Activated CD4-positive, alpha-beta T cell treated with anti-CD3 and anti-CD28 coated beads for 36 hours (primary cell): ENCODE measurements at regions of chr12 and their contacts with region 1.

Region 1: DNA sequence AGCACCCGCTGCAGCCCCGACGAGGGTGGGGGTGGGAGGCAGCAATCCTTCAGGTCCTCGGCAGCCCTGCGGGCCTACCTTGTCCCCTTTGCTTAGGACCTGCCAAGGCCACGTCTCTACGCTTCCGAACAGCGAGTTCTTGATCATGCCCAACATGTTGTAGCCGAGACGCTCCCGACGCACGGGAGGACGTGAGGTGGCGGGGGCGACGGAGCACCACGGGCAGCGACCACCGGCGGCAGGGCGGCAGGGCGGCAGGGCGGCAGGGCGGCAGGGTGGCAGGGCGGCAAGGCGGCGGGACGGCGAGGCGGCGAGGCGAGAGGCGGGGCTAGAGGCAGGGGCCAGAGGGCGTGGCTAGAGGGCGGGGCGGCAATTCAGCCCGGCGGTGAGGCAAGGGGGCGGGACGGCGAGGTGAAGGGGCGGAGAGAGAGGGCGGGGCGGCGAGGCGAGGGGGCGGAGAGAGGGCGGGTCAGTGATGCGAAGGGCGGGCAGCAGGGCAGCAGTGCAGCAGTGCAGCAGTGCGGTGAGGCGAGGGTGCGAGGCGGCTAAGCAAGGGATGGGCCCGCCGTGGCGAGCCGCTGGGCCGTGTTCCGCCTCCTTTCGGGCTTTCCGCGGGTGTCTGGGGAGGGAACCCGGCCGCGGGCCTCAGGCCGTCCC is at the start of gene HEBP1:
- DNase-seq: peak; percentile 99
- ATAC-seq: peak; percentile 92
- H3K4me3 Mint-ChIP-seq: peak within 1 kb of the TSS; percentile 86
- H3K27ac Mint-ChIP-seq: peak within 1 kb of the TSS; percentile 75
- H3K4me1 Mint-ChIP-seq: peaks cover 28% of the 10 kb centered on the region
- H3K27me3 Mint-ChIP-seq: peaks cover 6% of the 10 kb centered on the region
- total RNA-seq, gene HEBP1: 23.5 to 28.6 TPM

Region 2: DNA sequence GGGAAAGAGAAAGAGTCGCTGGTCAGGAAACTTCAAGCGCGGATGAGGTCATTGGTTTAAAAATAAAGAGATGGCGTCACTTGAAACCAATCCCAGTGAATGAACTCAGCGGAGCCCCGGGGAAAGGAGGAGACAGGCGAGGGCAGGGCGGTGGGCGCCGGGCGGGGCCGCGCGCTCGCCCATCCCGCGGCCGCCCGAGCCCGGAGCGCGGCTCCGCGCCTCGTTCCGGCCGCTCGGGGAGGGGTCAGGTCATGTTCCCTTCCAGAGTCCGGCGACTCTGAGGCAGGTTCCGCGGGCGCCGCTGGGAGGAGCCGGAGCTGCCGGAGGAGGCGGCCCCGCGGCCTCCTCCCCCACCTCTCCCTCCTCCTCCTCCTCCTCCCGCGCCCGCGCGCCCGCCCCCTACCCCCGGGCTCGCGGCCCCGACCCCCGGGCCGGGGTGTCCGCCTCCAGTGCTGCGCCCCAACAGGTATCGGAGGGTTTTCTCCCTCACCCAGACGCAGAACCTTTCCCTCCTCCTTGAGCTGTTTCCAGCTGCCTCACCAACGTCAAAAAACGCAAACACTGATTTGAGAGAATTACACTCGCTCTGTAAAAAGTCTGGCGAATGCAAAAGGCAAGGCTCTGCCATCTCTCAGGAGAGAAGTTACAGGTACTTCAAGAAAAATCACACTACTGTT is 437.4 kb before region 1 on chr12 and contains the start of gene DUSP16:
- CTCF ChIA-PET with region 1: no interaction called
- POLR2A ChIA-PET with region 1: no interaction called
- intact Hi-C with region 1: no loop called
- DNase-seq: peak; percentile 82
- ATAC-seq: peak; percentile 76
- H3K4me3 Mint-ChIP-seq: peak within 1 kb of the TSS; percentile 84
- H3K27ac Mint-ChIP-seq: peak within 1 kb of the TSS; percentile 88
- H3K4me1 Mint-ChIP-seq: peaks cover 37% of the 10 kb centered on the region
- H3K27me3 Mint-ChIP-seq: no peaks in the 10 kb centered on the region
- total RNA-seq, gene DUSP16: 39.3 to 40.4 TPM

Region 3: DNA sequence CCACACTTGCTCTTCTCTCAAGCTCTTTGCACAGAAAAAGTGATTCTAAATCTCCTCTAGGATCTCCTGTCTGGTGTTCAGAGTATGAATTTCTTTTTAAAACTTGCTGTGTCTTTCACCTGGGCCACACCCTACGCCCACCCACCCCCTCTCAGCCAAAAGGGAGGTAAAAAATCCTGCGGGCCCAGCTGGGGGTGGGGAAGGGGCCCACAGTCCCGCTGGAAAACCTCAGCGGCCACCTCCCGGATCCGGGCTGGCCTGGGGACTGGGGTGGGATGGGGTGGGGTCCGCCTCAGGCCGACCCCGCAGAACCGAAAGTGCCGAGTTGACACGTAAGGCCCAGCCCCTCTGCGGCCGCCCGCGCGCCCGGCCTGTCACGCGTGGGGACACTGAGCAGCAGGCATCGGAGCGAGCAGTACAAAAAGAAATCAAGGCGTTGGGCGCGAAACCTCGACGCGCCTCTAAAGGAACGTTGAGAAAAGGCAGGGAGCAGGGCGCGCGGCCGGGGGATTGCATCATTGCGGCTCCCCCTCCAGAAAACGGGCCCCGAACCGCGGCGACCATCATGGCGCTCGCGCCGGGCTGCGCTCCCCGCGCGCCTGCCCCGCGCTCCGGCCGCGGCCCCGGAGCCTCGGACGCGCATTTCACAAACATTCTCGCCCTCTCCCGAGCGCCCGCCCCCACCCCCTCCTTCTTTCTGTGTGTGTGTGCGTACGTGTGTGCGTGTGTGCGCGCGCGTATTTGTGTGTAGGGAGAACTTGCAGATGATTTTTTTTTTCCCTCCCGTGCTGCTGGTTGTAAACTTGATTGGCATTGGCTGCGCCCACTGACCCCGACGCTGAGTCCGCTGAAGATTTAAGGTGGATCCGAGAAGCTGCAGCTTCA is 275.2 kb before region 1 on chr12:
- CTCF ChIA-PET with region 1: no interaction called
- POLR2A ChIA-PET with region 1: no interaction called
- intact Hi-C with region 1: loop called in 1 of 2 experiments (anchors 2 kb)
- DNase-seq: peak; percentile 94
- ATAC-seq: peak; percentile 59
- H3K4me3 Mint-ChIP-seq: peak overlapping the region; percentile 93
- H3K27ac Mint-ChIP-seq: peak overlapping the region; percentile 98
- H3K4me1 Mint-ChIP-seq: peaks cover 45% of the 10 kb centered on the region
- H3K27me3 Mint-ChIP-seq: no peaks in the 10 kb centered on the region

Region 4: GRCh38 chr12:12837025-12837872 is 162.8 kb before region 1 on chr12:
- CTCF ChIA-PET with region 1: interaction called, 5 read pairs
- POLR2A ChIA-PET with region 1: no interaction called
- intact Hi-C with region 1: loop called in 1 of 2 experiments (anchors 5 kb)
- DNase-seq: peak; percentile 76
- ATAC-seq: peak; percentile 95
- H3K4me3 Mint-ChIP-seq: no peak overlapping the region
- H3K27ac Mint-ChIP-seq: peak overlapping the region; percentile 77
- H3K4me1 Mint-ChIP-seq: peaks cover 44% of the 10 kb centered on the region
- H3K27me3 Mint-ChIP-seq: no peaks in the 10 kb centered on the region

Region 5: DNA sequence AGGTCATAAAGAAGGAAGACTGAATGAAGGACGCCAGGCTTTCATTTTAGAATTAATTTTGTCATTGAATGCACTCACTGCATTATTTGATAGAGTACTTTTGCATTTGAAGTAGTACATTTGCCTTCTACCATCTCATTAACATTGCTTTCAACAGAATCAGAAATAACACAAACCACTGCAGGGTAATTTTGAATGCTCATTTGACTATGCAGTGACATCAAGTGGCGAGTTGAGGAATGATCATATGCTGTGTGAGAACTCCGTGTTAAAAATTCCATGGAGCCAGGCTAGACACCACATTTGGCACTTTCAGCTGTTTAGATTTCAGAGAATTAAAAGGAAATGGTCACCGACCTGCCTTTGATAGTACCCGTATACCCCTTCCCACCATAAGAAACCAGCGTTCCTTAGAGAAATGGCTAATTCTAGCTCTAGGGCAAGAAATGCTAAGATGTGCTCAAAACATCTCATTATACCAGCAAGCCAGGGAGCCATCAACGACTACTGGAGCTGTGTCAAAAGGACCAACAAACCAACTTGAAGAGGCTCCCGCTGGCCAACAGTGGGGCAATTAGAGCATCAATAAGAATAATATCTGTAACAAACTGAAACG is 16.6 kb before region 1 on chr12:
- CTCF ChIA-PET with region 1: interaction called, 21 read pairs
- POLR2A ChIA-PET with region 1: no interaction called
- intact Hi-C with region 1: no loop called
- DNase-seq: peak; percentile 16
- ATAC-seq: no peak
- H3K4me3 Mint-ChIP-seq: no peak overlapping the region
- H3K27ac Mint-ChIP-seq: no peak overlapping the region
- H3K4me1 Mint-ChIP-seq: no peaks in the 10 kb centered on the region
- H3K27me3 Mint-ChIP-seq: no peaks in the 10 kb centered on the region

Region 6: GRCh38 chr12:13165617-13166041 is 165.5 kb after region 1 on chr12:
- CTCF ChIA-PET with region 1: no interaction called
- POLR2A ChIA-PET with region 1: no interaction called
- intact Hi-C with region 1: loop called in 1 of 2 experiments (anchors 1 kb)
- DNase-seq: peak; percentile 92
- ATAC-seq: peak; percentile 97
- H3K4me3 Mint-ChIP-seq: no peak overlapping the region
- H3K27ac Mint-ChIP-seq: peak overlapping the region; percentile 58
- H3K4me1 Mint-ChIP-seq: peaks cover 24% of the 10 kb centered on the region
- H3K27me3 Mint-ChIP-seq: peaks cover 2% of the 10 kb centered on the region

Region 7: DNA sequence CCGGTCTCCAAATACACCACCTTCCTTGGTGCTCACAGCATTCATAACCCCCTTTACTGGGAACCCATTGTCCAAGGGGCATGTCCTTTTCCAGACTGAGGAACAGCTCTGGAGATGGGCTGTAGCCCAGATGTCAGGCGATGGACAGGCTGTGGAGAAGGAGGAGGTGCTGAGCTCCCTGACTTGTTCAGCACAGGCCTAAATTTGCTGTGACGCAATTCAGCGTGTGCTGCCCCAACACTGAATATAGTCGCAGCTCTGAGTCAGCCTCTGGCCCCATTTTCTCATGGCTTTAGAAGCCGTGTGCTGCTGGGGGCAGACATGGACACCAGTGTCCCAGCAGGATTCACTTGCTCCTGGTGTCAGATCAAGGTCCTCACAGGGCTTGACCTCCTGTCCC is 465.5 kb after region 1 on chr12:
- CTCF ChIA-PET with region 1: no interaction called
- POLR2A ChIA-PET with region 1: no interaction called
- intact Hi-C with region 1: no loop called
- DNase-seq: no peak
- ATAC-seq: no peak
- H3K4me3 Mint-ChIP-seq: no peak overlapping the region
- H3K27ac Mint-ChIP-seq: no peak overlapping the region
- H3K4me1 Mint-ChIP-seq: no peaks in the 10 kb centered on the region
- H3K27me3 Mint-ChIP-seq: peaks cover 20% of the 10 kb centered on the region